H1 (cell line): ENCODE measurements at regions of chr12 and their contacts with region 1.

Region 1: GRCh38 chr12:6278439-6279255 is 31.8 kb upstream of the PLEKHG6 start:
- DNase-seq: peak; percentile 39 to 97
- H3K4me3 ChIP-seq: peak overlapping the region; percentile 28 to 64 (median 40)
- H3K27ac ChIP-seq: peak overlapping the region; percentile 61; the same call in 1 of the 2 replicates
- H3K4me1 ChIP-seq: peaks cover 15 to 33% (median 21%) of the 10 kb centered on the region in 4 experiments
- H3K27me3 ChIP-seq: no peaks in the 10 kb centered on the region; a peak in 1 of 7 replicates
- CTCF ChIP-seq: peak; percentile 82 to 87 (median 86)
- EP300 ChIP-seq: no peak
- POLR2A ChIP-seq: no peak
- RAD21 ChIP-seq: peak; percentile 49 to 87

Region 2: DNA sequence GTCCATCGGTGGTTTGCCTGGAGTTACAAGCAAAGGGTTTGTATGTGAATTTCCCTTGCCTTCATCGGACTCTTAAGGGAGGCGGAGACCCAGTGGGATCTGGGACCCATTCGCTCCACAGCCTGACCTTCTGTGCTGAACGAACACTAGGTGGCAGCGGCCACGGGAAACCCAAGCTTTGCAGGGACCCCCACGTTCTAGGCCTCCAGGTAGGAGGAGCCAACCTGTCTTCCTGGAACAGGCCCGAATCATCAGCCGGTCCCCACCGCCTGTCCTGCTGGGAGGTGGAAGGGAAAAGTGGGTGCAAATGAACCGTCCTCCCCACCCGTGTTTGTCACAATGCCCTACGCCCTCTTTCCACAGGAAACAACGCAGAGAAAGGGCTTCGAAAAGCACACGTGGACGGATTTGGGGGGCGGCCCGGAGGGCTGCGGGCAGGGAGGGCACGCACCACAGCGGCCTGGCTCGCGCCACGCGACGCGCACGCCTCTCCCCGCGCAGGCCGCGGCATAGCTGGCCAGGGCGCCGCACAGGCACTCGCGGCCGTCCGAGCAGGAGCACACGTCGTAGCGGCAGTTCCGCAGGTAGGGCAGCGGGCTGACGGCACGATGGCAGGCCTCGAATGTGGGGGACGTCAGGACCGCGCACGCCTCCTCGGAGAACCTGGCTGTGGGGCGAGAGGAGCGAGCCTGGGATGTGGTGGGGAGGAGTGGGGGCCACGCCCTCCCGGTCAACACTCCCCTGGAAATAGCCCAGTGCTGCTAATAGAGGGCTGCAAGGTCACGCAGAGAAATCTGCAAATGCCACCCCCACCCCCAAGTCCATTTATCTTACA is 222.0 kb before region 1 on chr12:
- CTCF ChIA-PET with region 1: interaction called, 130 read pairs
- POLR2A ChIA-PET with region 1: interaction called, 3 read pairs
- DNase-seq: peak; percentile 33 to 63
- H3K4me3 ChIP-seq: peak overlapping the region; percentile 38 to 62 (median 40)
- H3K27ac ChIP-seq: no peak overlapping the region
- H3K4me1 ChIP-seq: peaks cover 7 to 18% (median 16%) of the 10 kb centered on the region in 4 experiments
- H3K27me3 ChIP-seq: peaks cover 0 to 16% (median 10%) of the 10 kb centered on the region in 4 experiments; a peak in 5 of 7 replicates
- CTCF ChIP-seq: peak; percentile 58 to 66 (median 60)
- EP300 ChIP-seq: no peak
- POLR2A ChIP-seq: no peak
- RAD21 ChIP-seq: peak; percentile 25 to 56; a peak in 3 of 4 replicates

Region 3: GRCh38 chr12:6062757-6063735 is 215.6 kb before region 1 on chr12:
- CTCF ChIA-PET with region 1: interaction called, 130 read pairs
- POLR2A ChIA-PET with region 1: interaction called, 4 read pairs
- DNase-seq: peak in 1 of 2 experiments; percentile 90
- H3K4me3 ChIP-seq: no peak overlapping the region
- H3K27ac ChIP-seq: no peak overlapping the region
- H3K4me1 ChIP-seq: peaks cover 7 to 9% (median 7%) of the 10 kb centered on the region in 4 experiments
- H3K27me3 ChIP-seq: peaks cover 0 to 3% (median 0%) of the 10 kb centered on the region in 4 experiments; a peak in 1 of 7 replicates
- CTCF ChIP-seq: peak; percentile 92 to 99 (median 98)
- EP300 ChIP-seq: no peak
- POLR2A ChIP-seq: no peak
- RAD21 ChIP-seq: peak; percentile 97

Region 4: DNA sequence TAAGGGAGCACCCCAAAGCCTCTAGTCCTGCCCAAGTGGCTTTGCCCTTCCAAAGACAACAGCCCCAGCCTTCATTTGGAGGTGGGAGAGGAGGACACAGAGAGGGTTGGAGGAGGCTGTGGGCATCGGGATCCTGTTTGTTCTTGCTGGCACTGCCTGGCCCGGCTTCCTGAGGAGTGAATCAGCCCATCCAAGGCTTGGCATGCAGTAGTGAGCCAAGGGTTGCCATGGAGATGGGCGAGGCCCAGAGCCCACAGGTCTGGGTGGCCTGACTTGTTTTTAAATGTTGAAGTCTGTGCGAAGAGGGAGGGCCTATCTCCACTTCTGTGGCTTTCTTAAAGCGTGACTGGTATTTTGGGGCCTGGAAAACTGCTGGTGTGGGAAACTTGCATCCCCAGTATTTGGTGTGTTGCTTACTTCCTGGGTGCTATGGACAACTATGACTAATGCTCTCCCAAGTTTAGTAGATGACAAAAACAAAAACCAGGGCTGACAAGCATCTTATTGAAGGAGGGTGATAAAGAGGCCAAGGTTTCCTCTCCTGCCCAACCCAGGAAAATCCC is 62.6 kb before region 1 on chr12:
- CTCF ChIA-PET with region 1: interaction called, 433 read pairs
- POLR2A ChIA-PET with region 1: interaction called, 19 read pairs
- DNase-seq: no peak
- H3K4me3 ChIP-seq: peak overlapping the region in 1 of 4 experiments; percentile 23; a peak in 1 of 8 replicates
- H3K27ac ChIP-seq: peak overlapping the region; percentile 79
- H3K4me1 ChIP-seq: peaks cover 28 to 50% (median 43%) of the 10 kb centered on the region in 4 experiments
- H3K27me3 ChIP-seq: no peaks in the 10 kb centered on the region; a peak in 1 of 7 replicates
- CTCF ChIP-seq: no peak
- EP300 ChIP-seq: no peak
- POLR2A ChIP-seq: no peak
- RAD21 ChIP-seq: no peak

Region 5: DNA sequence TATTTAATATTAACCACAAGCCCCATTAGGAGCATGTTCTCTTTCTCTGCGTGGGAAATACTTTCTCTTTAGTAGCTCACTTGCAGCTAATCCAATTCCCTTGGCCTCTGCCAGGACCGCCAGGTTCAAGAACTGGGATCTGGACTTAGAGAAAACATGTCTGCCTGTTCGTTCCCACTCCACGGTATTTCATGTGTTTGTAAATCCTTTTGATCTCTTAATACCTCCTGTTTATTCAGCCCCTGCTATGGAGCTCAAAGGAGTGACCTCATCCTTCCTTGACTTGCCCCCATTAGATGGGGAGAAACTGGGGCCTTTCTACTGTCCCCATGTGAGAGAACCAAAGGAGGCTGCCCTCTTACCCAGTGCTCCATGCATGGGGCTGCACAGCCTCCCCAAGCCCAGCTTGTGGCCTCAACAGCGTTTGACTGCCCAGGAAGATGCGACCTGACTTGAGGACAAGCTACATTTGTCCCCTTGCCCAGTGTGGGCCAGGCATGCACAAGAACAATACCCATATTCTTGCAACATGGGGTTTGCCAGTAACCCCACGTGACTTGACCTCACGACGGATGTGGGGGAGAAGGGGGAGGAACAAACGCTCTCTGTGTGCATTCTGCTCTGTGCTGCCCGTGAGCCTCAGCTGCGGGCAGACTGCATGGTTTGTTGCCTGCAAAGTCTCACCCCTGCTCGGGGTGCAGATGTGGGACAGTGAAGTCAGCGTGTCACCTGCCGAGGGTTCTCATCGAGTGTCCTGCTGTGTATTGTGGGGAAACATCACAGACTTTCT is 48.1 kb before region 1 on chr12:
- CTCF ChIA-PET with region 1: interaction called, 40 read pairs
- POLR2A ChIA-PET with region 1: interaction called, 4 read pairs
- DNase-seq: no peak
- H3K4me3 ChIP-seq: no peak overlapping the region
- H3K27ac ChIP-seq: no peak overlapping the region
- H3K4me1 ChIP-seq: peaks cover 0 to 7% (median 4%) of the 10 kb centered on the region in 4 experiments; a peak in 6 of 7 replicates
- H3K27me3 ChIP-seq: no peaks in the 10 kb centered on the region
- CTCF ChIP-seq: no peak
- EP300 ChIP-seq: no peak
- POLR2A ChIP-seq: no peak
- RAD21 ChIP-seq: no peak

Region 6: GRCh38 chr12:6241495-6241894 is 37.2 kb before region 1 on chr12:
- CTCF ChIA-PET with region 1: interaction called, 22 read pairs
- POLR2A ChIA-PET with region 1: interaction called, 3 read pairs
- DNase-seq: no peak
- H3K4me3 ChIP-seq: no peak overlapping the region
- H3K27ac ChIP-seq: no peak overlapping the region
- H3K4me1 ChIP-seq: no peaks in the 10 kb centered on the region
- H3K27me3 ChIP-seq: no peaks in the 10 kb centered on the region
- CTCF ChIP-seq: no peak
- EP300 ChIP-seq: no peak
- POLR2A ChIP-seq: no peak
- RAD21 ChIP-seq: no peak

Region 7: GRCh38 chr12:6267139-6267721 is 11.4 kb before region 1 on chr12:
- CTCF ChIA-PET with region 1: interaction called, 53 read pairs
- POLR2A ChIA-PET with region 1: interaction called, 5 read pairs
- DNase-seq: no peak
- H3K4me3 ChIP-seq: no peak overlapping the region
- H3K27ac ChIP-seq: no peak overlapping the region
- H3K4me1 ChIP-seq: peaks cover 9 to 17% (median 13%) of the 10 kb centered on the region in 4 experiments
- H3K27me3 ChIP-seq: no peaks in the 10 kb centered on the region
- CTCF ChIP-seq: no peak
- EP300 ChIP-seq: no peak
- POLR2A ChIP-seq: no peak
- RAD21 ChIP-seq: no peak

Region 8: DNA sequence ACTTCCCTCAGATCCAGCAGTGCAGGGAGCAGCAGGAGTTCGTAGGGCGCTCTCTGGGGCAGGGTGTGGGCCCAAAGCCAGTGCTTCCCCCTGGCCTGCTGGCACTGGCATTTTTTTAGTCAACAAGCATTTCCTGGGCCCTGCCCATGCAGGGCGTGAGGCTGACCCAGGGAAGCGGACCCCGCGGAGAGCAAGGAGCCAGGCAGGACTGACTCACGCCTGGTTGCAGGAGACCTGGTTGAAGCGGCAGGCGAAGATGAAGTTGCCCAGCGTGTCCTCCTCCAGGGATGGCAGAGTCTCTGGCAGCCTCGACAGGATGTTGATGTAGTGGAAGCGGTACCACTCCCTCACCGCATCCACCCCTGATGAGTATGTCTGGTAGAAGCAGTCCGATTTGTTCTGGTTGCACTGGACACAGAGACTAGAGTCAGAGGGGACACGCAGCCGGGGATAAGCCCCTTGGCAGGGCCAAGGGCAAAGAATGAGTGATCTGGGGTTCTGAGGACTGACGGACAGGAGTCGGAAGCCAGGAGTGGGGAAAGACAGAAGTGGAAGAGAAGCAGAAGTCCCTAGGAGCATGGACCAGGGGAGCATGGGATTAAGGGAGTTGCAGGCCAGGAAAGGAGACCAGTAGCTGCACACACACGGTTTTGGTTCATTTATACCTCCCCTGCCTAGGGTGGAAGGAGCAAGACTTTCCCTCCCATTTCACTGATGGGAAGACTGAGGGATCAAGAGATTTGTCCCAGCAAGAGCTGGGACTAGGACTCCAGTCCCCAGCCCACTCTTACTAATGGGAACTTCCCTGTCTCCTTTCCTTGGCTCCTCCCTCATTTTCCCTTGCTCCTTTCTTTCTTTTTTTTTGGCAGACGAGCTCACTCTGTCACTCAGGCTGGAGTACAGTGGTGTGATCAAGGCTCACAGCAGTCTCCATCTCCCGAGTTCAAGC is 83.5 kb after region 1 on chr12:
- CTCF ChIA-PET with region 1: no interaction called
- POLR2A ChIA-PET with region 1: no interaction called
- DNase-seq: no peak
- H3K4me3 ChIP-seq: no peak overlapping the region
- H3K27ac ChIP-seq: no peak overlapping the region
- H3K4me1 ChIP-seq: peaks cover 0 to 3% (median 1%) of the 10 kb centered on the region in 4 experiments; a peak in 3 of 7 replicates
- H3K27me3 ChIP-seq: no peaks in the 10 kb centered on the region
- CTCF ChIP-seq: no peak
- EP300 ChIP-seq: no peak
- POLR2A ChIP-seq: no peak
- RAD21 ChIP-seq: no peak

Region 9: GRCh38 chr12:6416596-6416995 is 137.9 kb after region 1 on chr12:
- CTCF ChIA-PET with region 1: no interaction called
- POLR2A ChIA-PET with region 1: no interaction called
- DNase-seq: no peak
- H3K4me3 ChIP-seq: no peak overlapping the region
- H3K27ac ChIP-seq: no peak overlapping the region
- H3K4me1 ChIP-seq: no peaks in the 10 kb centered on the region
- H3K27me3 ChIP-seq: no peaks in the 10 kb centered on the region
- CTCF ChIP-seq: no peak
- EP300 ChIP-seq: no peak
- POLR2A ChIP-seq: no peak
- RAD21 ChIP-seq: no peak